ENCODE measurements at regions of chr9 and their contacts with region 1.

Region 1: DNA sequence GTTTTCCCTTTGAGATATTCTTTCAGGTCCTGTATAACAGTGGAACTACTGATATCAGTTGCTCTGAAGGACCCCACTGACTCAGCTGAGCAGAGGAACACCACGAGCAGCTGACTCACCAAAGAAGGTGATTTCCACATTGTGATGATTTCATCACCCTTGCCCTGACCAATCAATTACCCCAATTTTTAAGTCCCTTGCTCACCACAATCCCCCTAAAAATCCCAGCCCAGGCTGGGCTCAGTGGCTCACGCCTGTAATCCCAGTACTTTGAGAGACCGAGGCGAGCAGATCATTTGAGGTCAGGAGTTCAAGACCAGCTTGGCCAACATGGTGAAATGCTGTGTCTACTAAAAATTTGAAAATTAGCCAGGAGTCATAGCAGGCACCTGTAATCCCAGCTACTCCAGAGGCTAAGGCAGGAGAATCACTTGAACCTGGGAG is 125.3 kb upstream of the ABCA1 start:
- DNase-seq: peak; percentile 83
- H3K4me3 Mint-ChIP-seq: no peak overlapping the region
- H3K27ac Mint-ChIP-seq: peak overlapping the region; percentile 43
- H3K4me1 Mint-ChIP-seq: peaks cover 36% of the 10 kb centered on the region
- H3K27me3 Mint-ChIP-seq: no peaks in the 10 kb centered on the region

Region 2: GRCh38 chr9:104860263-104860662 is 193.0 kb before region 1 on chr9:
- CTCF ChIA-PET with region 1: no interaction called
- POLR2A ChIA-PET with region 1: no interaction called
- intact Hi-C with region 1: no loop called
- DNase-seq: no peak
- H3K4me3 Mint-ChIP-seq: no peak overlapping the region
- H3K27ac Mint-ChIP-seq: no peak overlapping the region
- H3K4me1 Mint-ChIP-seq: peaks cover 3% of the 10 kb centered on the region
- H3K27me3 Mint-ChIP-seq: no peaks in the 10 kb centered on the region

Region 3: DNA sequence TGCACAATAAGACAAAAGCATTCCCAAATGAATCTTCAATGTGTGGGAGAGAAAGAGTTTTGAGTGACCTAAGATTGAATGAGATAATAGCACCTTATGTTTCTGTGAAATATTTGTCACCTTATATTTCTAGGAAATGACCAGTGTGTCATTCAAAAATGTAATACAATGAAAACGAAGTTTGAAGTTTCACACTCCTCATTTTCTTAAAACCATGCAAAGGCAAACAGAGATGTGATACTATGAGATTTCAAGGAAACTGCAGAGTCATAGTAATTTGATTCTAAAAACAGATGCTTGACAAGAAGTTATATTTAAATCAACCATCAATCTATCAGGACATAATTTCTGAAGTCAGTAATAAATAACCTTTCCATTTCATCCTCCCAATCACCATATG is 111.6 kb before region 1 on chr9:
- CTCF ChIA-PET with region 1: no interaction called
- POLR2A ChIA-PET with region 1: no interaction called
- intact Hi-C with region 1: loop called (anchors 1 kb)
- DNase-seq: no peak
- H3K4me3 Mint-ChIP-seq: no peak overlapping the region
- H3K27ac Mint-ChIP-seq: peak overlapping the region; percentile 62
- H3K4me1 Mint-ChIP-seq: peaks cover 14% of the 10 kb centered on the region
- H3K27me3 Mint-ChIP-seq: no peaks in the 10 kb centered on the region

Region 4: DNA sequence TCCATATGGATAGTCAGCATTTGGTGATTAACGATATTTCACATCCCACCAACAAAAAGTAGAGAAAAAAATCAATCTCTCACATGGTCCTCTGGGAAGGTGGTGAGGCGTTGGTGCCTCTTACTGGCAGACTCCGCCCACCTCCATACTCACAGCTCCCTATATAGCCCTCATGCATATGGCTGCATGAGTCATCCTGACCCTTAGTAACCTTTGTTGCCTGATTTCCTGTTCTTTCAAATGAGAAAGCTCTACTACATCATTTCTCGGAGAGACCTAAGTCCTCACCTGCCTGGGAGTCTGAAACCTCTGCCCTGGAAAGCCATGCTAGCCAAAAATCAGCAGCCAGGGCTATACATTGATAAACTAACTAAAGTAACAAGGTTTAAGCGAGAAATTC is 92.0 kb before region 1 on chr9:
- CTCF ChIA-PET with region 1: no interaction called
- POLR2A ChIA-PET with region 1: no interaction called
- intact Hi-C with region 1: loop called (anchors 1 kb)
- DNase-seq: peak; percentile 83
- H3K4me3 Mint-ChIP-seq: no peak overlapping the region
- H3K27ac Mint-ChIP-seq: peak overlapping the region; percentile 85
- H3K4me1 Mint-ChIP-seq: peaks cover 31% of the 10 kb centered on the region
- H3K27me3 Mint-ChIP-seq: no peaks in the 10 kb centered on the region

Region 5: DNA sequence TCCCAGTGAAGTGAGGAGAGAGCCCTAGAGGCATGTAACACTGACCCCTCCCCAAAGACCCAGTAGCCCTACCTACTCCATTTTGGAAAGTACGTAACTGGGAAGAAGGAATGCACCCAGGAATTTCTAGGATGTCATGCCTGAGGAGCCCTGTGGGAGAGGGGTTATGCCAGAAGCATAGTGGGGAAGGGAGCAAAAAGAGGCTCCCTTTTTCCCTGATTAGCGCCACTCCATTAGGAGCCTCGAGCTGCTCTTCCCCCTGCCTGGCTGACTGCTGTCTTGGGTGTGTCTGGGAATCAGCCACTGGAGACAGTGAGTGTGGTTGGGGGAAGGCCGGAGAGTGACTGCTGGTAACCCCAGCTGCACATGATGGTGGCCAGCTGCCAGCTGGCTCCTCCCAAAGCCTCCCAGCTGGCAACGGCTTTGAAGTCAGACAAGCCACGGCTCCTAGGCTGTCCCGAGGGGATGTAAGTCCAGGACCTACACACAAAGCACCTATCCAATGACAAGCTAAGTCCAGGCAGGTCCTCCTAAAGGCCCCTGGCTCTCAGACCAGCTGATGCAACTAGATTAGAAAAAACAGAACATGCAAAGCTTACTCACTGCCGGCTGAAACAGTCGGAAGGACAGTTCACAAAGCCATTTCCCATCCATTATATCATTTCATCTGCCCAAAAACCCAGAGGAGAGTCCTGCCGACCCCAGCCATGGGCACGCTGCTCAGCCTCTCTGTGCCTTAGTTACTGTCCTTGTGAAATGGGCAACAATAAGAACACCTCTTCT is 11.3 kb after region 1 on chr9:
- CTCF ChIA-PET with region 1: no interaction called
- POLR2A ChIA-PET with region 1: interaction called, 4 read pairs
- intact Hi-C with region 1: loop called (anchors 1 kb)
- DNase-seq: no peak
- H3K4me3 Mint-ChIP-seq: no peak overlapping the region
- H3K27ac Mint-ChIP-seq: no peak overlapping the region
- H3K4me1 Mint-ChIP-seq: peaks cover 13% of the 10 kb centered on the region
- H3K27me3 Mint-ChIP-seq: peaks cover 6% of the 10 kb centered on the region

Region 6: DNA sequence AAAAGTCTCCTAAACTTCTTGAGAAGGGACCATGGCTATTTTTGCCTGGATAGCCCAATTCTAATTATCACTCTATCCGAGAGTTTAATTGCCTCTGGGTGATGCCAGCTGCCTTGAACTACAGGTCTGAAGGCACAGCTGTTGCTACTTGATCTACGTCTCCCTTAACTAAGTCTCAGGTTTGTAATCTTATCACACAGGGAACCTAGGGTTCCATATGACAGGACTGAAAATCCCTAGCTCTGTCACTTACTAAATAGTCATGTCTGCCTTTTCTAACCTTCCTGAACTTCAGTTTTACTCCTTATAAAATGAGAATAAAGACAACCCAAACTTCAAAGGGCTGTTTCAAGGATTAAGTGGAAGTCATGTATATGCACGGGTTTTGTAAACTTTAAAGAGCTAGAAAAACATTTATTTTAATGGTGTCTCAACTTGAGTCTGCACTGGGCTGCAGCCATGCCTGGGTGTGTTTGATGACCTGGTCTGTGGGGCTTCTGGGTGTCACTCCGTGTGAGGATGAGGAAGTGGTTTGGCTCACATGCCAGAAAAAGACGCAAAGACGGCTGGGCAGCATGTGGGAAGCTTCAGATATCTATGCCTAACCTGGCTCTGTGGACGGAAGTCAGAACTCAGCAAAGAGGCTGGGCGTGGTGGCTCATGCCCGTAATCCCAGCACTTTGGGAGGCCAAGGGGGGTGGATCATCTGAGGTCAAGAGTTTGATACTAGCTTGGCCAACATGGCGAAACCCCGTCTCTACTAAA is 61.9 kb after region 1 on chr9:
- CTCF ChIA-PET with region 1: no interaction called
- POLR2A ChIA-PET with region 1: no interaction called
- intact Hi-C with region 1: loop called (anchors 2 kb)
- DNase-seq: peak; percentile 59
- H3K4me3 Mint-ChIP-seq: no peak overlapping the region
- H3K27ac Mint-ChIP-seq: peak overlapping the region; percentile 16
- H3K4me1 Mint-ChIP-seq: peaks cover 23% of the 10 kb centered on the region
- H3K27me3 Mint-ChIP-seq: no peaks in the 10 kb centered on the region

Region 7: DNA sequence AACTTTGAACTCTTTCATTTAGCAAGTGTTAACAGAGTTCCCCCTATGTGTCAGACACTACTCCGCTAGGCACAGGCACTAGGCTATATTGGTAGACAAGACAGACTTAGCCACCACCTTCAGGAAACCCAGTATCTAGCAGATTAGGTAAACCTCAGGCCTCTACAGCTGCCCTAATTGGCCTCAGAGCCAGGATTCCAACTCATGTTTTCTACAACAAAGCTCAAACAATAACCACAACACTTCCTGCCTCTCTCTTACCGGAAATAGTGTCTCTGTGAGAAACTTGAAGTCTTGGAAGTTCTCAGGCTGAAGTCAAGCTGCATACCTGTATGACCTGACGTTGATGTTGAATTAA is 74.6 kb after region 1 on chr9:
- CTCF ChIA-PET with region 1: no interaction called
- POLR2A ChIA-PET with region 1: no interaction called
- intact Hi-C with region 1: loop called (anchors 2 kb)
- DNase-seq: peak; percentile 62
- H3K4me3 Mint-ChIP-seq: no peak overlapping the region
- H3K27ac Mint-ChIP-seq: peak overlapping the region; percentile 60
- H3K4me1 Mint-ChIP-seq: peaks cover 38% of the 10 kb centered on the region
- H3K27me3 Mint-ChIP-seq: no peaks in the 10 kb centered on the region